Vagina (tissue), 2 donors: ENCODE measurements at regions of chr1 and their contacts with region 1.

Region 1: GRCh38 chr1:212070720-212071302 is 35.3 kb downstream of the DTL start:
- DNase-seq: no peak
- H3K4me3 ChIP-seq: no peak overlapping the region
- H3K27ac ChIP-seq: no peak overlapping the region
- H3K4me1 ChIP-seq: no peaks in the 10 kb centered on the region
- H3K27me3 ChIP-seq: no peaks in the 10 kb centered on the region
- CTCF ChIP-seq: peak; percentile 68 to 81 (median 71)
- POLR2A ChIP-seq: no peak

Region 2: DNA sequence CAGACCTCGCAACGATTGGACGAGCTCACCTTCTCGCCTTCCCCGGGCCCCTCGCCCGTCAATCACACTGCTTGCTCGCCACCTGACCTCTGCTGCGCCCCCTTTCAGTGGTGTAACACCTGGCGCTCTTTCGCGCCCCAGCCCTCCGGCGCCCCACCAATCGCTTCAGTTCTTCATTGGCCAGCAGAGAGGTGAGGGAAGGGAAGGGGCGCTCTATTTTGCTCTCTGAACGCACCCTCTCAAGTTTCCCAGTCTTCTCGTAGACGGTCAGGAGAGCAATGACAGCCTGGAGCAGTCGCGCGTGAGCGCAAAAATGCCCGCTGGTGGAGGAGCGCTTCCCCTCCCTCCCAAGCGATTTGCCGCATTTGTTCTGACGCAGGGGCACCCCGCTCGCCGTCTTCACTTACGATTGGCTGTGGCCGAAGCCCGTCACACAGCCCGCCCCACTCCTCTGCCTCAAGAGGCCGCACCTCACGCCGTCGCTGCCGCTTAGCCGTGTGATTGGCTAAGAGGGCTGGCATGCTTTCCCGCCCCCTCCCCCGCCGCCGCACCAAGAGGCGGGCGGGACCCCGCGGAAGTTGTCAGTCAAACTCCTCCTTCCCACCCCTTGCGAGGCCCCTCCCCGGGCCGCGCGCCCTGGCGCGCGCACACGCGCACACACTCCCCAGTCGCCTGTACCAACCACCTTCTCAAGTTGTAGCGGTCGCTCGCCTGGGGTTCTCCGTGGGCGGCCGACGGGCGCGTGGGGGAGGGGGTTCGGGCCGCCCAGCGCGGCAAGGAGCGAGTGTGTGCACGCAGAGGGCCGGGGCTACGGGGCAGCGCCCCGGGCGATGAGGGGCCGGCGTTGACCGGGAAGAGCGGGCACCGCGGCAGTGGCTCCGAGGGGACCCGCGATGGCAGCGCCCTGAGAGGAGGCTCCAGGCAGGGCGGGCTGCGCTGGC is 214.2 kb after region 1 on chr1 and contains the start of gene PPP2R5A:
- intact Hi-C with region 1: loop called (anchors 10 kb)
- DNase-seq: peak; percentile 99 to 100
- H3K4me3 ChIP-seq: peak within 1 kb of the TSS; percentile 73 to 92
- H3K27ac ChIP-seq: peak within 1 kb of the TSS; percentile 98
- H3K4me1 ChIP-seq: peaks cover 29% of the 10 kb centered on the region
- H3K27me3 ChIP-seq: no peaks in the 10 kb centered on the region
- CTCF ChIP-seq: peak in 1 of 3 experiments; percentile 27
- POLR2A ChIP-seq: peak in 1 of 2 donors; percentile 96
- total RNA-seq, gene PPP2R5A: 33.9 TPM

Region 3: GRCh38 chr1:212368073-212368484 is 297.3 kb after region 1 on chr1:
- intact Hi-C with region 1: loop called (anchors 5 kb)
- DNase-seq: no peak
- H3K4me3 ChIP-seq: no peak overlapping the region
- H3K27ac ChIP-seq: no peak overlapping the region
- H3K4me1 ChIP-seq: no peaks in the 10 kb centered on the region
- H3K27me3 ChIP-seq: no peaks in the 10 kb centered on the region
- CTCF ChIP-seq: peak; percentile 31 to 72 (median 50)
- POLR2A ChIP-seq: no peak

Region 4: GRCh38 chr1:212455803-212456528 is 385.2 kb after region 1 on chr1:
- intact Hi-C with region 1: loop called (anchors 2 kb)
- DNase-seq: no peak
- H3K4me3 ChIP-seq: no peak overlapping the region
- H3K27ac ChIP-seq: peak overlapping the region; percentile 28
- H3K4me1 ChIP-seq: peaks cover 14% of the 10 kb centered on the region
- H3K27me3 ChIP-seq: no peaks in the 10 kb centered on the region
- CTCF ChIP-seq: peak; percentile 96 to 99 (median 98)
- POLR2A ChIP-seq: no peak